Right cardiac atrium (tissue), 5 donors: ENCODE measurements at regions of chr11 and their contacts with region 1.

Region 1: DNA sequence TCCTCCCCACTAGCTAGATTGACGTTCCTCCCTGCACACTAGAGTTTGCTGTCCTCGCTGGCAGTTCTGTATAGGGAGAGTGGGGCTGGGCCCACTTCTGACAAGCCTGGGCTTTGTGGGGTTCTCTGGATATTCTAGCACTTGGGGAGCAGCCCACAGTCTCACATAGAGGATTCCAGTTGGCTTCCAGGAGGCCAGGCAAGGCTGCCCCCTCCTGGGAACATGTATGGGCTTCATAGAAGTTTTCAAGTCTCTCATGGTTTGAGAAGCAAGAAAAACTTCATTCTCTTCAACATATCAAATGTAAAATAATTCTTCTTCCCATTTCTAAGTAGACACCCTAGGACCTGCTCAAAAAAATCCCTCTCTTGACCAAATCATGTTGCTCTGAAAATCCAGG is 87.5 kb downstream of the NAV2 start:
- DNase-seq: no peak
- ATAC-seq: no peak
- H3K4me3 ChIP-seq: no peak overlapping the region
- H3K27ac ChIP-seq: no peak overlapping the region
- H3K4me1 ChIP-seq: peaks cover 8% of the 10 kb centered on the region
- H3K27me3 ChIP-seq: no peaks in the 10 kb centered on the region

Region 2: GRCh38 chr11:19561011-19561410 is 239.2 kb before region 1 on chr11:
- intact Hi-C with region 1: loop called in 1 of 4 experiments (anchors 5 kb)
- DNase-seq: no peak
- ATAC-seq: no peak
- H3K4me3 ChIP-seq: no peak overlapping the region
- H3K27ac ChIP-seq: no peak overlapping the region
- H3K4me1 ChIP-seq: no peaks in the 10 kb centered on the region
- H3K27me3 ChIP-seq: no peaks in the 10 kb centered on the region